Heart left ventricle (tissue), 16 donors: ENCODE measurements at regions of chrX and their contacts with region 1.

Region 1: DNA sequence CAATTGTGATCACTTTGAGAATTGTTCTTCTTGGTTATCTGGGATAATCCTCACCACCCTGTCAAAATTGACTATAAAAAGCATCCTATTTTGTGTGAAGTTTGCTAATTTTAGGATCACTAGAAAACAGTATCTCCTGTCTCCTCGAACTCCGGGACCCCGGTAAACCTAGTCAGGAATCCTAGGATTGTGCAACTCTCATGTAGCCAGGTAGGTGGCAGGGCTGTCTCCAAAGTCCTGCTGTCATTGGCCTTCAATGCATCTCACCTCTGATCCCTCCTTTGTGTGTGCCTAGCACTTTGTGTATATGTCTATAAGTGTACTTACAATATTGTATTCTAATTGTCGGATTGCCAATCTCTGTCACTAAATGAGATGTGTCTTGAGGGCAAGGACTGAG is 1564.8 kb downstream of the RPA4 start:
- DNase-seq: no peak
- ATAC-seq: no peak
- H3K4me3 ChIP-seq: no peak overlapping the region
- H3K27ac ChIP-seq: no peak overlapping the region
- H3K4me1 ChIP-seq: no peaks in the 10 kb centered on the region
- H3K27me3 ChIP-seq: no peaks in the 10 kb centered on the region
- CTCF ChIP-seq: no peak
- POLR2A ChIP-seq: no peak

Region 2: GRCh38 chrX:97860226-97860625 is 588.3 kb before region 1 on chrX:
- intact Hi-C with region 1: no loop called
- DNase-seq: no peak
- ATAC-seq: no peak
- H3K4me3 ChIP-seq: no peak overlapping the region
- H3K27ac ChIP-seq: no peak overlapping the region
- H3K4me1 ChIP-seq: no peaks in the 10 kb centered on the region
- H3K27me3 ChIP-seq: no peaks in the 10 kb centered on the region
- CTCF ChIP-seq: no peak
- POLR2A ChIP-seq: no peak

Region 3: GRCh38 chrX:98203800-98204199 is 244.7 kb before region 1 on chrX:
- intact Hi-C with region 1: no loop called
- DNase-seq: no peak
- ATAC-seq: no peak
- H3K4me3 ChIP-seq: no peak overlapping the region
- H3K27ac ChIP-seq: no peak overlapping the region
- H3K4me1 ChIP-seq: no peaks in the 10 kb centered on the region
- H3K27me3 ChIP-seq: peaks cover 0 to 5% (median 0%) of the 10 kb centered on the region in 9 donors
- CTCF ChIP-seq: no peak
- POLR2A ChIP-seq: no peak

Region 4: GRCh38 chrX:98480606-98481005 is 32.1 kb after region 1 on chrX:
- intact Hi-C with region 1: loop called in 1 of 10 experiments (anchors 2 kb)
- DNase-seq: no peak
- ATAC-seq: no peak
- H3K4me3 ChIP-seq: no peak overlapping the region
- H3K27ac ChIP-seq: no peak overlapping the region
- H3K4me1 ChIP-seq: no peaks in the 10 kb centered on the region
- H3K27me3 ChIP-seq: no peaks in the 10 kb centered on the region
- CTCF ChIP-seq: no peak
- POLR2A ChIP-seq: no peak